Transverse colon (tissue), 4 donors: ENCODE measurements at regions of chr12 and their contacts with region 1.

Region 1: DNA sequence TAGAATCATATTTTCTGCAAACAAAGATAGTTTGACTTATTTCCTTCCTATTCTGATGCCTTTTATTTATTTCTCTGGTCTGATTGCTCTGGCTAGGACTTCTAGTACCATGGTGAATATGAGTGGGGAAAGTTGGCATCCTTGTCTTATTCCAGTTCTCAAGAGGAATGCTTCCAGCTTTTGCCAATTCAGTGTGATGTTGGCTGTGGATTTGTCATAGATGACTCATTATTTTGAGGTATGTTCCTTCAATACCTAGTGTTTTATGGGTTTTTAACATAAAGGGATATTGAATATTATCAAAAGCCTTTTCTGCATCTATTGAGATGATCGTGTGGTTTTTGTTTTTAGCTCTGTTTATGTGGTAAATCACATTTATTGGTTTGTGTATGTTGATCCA is 139.4 kb upstream of the CNTN1 start:
- DNase-seq: no peak
- H3K4me3 ChIP-seq: no peak overlapping the region
- H3K27ac ChIP-seq: no peak overlapping the region
- H3K4me1 ChIP-seq: no peaks in the 10 kb centered on the region
- H3K27me3 ChIP-seq: no peaks in the 10 kb centered on the region
- CTCF ChIP-seq: no peak
- EP300 ChIP-seq: no peak
- POLR2A ChIP-seq: no peak

Region 2: GRCh38 chr12:42162193-42162592 is 1609.3 kb after region 1 on chr12:
- in situ Hi-C with region 1: no loop called
- intact Hi-C with region 1: no loop called
- DNase-seq: no peak
- H3K4me3 ChIP-seq: no peak overlapping the region
- H3K27ac ChIP-seq: no peak overlapping the region
- H3K4me1 ChIP-seq: peaks cover 0 to 11% (median 2%) of the 10 kb centered on the region in 4 donors
- H3K27me3 ChIP-seq: no peaks in the 10 kb centered on the region
- CTCF ChIP-seq: no peak
- EP300 ChIP-seq: no peak
- POLR2A ChIP-seq: no peak

Region 3: DNA sequence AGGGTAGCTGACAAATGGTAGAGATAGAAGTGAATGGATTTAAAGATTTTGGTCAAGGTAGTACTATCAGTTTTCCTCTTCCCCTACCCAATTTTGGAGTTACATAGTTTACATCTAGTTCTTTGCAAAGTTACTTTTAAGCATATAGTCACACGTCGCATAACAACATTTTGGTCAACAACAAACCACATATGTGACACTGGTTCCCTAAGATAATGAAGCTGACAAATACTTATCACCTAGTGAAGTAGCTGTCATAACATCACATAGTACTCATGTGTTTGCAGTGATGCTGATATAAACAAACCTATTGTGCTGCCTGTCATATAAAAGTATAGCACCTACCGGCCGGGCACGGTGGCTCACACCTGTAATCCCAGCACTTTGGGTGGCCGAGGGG is 1639.8 kb after region 1 on chr12:
- in situ Hi-C with region 1: no loop called
- intact Hi-C with region 1: loop called (anchors 5 kb)
- DNase-seq: no peak
- H3K4me3 ChIP-seq: no peak overlapping the region
- H3K27ac ChIP-seq: no peak overlapping the region
- H3K4me1 ChIP-seq: no peaks in the 10 kb centered on the region
- H3K27me3 ChIP-seq: no peaks in the 10 kb centered on the region
- CTCF ChIP-seq: no peak
- EP300 ChIP-seq: no peak
- POLR2A ChIP-seq: no peak